ENCODE measurements at regions of chr2 and their contacts with region 1.

Region 1: GRCh38 chr2:109348671-109349550 is 219.9 kb downstream of the SH3RF3 start:
- DNase-seq: peak; percentile 18 to 84 (median 67)
- ATAC-seq: peak; percentile 99
- H3K4me3 Mint-ChIP-seq: peak overlapping the region; percentile 62 to 86 (median 74)
- H3K27ac Mint-ChIP-seq: peak overlapping the region; percentile 82 to 98 (median 94)
- H3K4me1 Mint-ChIP-seq: peaks cover 30 to 75% (median 61%) of the 10 kb centered on the region in 4 donors
- H3K27me3 Mint-ChIP-seq: no peaks in the 10 kb centered on the region

Region 2: GRCh38 chr2:109128048-109128465 is 220.9 kb before region 1 on chr2:
- POLR2A ChIA-PET with region 1: interaction called, 21 read pairs
- DNase-seq: peak; percentile 48 to 81 (median 66)
- ATAC-seq: peak; percentile 56 to 63
- H3K4me3 Mint-ChIP-seq: peak overlapping the region; percentile 78 to 97 (median 85)
- H3K27ac Mint-ChIP-seq: peak overlapping the region; percentile 28 to 93 (median 82)
- H3K4me1 Mint-ChIP-seq: peaks cover 29 to 52% (median 47%) of the 10 kb centered on the region in 4 donors
- H3K27me3 Mint-ChIP-seq: peaks cover 0 to 18% (median 0%) of the 10 kb centered on the region in 5 donors

Region 3: GRCh38 chr2:109331896-109332848 is 16.7 kb before region 1 on chr2:
- POLR2A ChIA-PET with region 1: interaction called, 11 read pairs
- DNase-seq: peak in 3 of 10 donors; percentile 16 to 34 (median 33)
- ATAC-seq: peak; percentile 74 to 77
- H3K4me3 Mint-ChIP-seq: peak overlapping the region; percentile 68 to 91 (median 80)
- H3K27ac Mint-ChIP-seq: peak overlapping the region; percentile 34 to 91 (median 81)
- H3K4me1 Mint-ChIP-seq: peaks cover 29 to 63% (median 59%) of the 10 kb centered on the region in 4 donors
- H3K27me3 Mint-ChIP-seq: peaks cover 0 to 3% (median 0%) of the 10 kb centered on the region in 5 donors